Astrocyte of the cerebellum (primary cell): ENCODE measurements at regions of chr14 and their contacts with region 1.

Region 1: GRCh38 chr14:79352076-79352630 is 859.2 kb downstream of the DIO2 start:
- DNase-seq: no peak
- H3K4me3 ChIP-seq: no peak overlapping the region
- CTCF ChIP-seq: no peak

Region 2: GRCh38 chr14:79395061-79395460 is 42.9 kb after region 1 on chr14:
- in situ Hi-C with region 1: loop called (anchors 5 kb)
- DNase-seq: no peak
- H3K4me3 ChIP-seq: no peak overlapping the region
- CTCF ChIP-seq: no peak